Activated B cell treated with CpG ODN at 0.5 μM for 24 hours (primary cell): ENCODE measurements at regions of chr14 and their contacts with region 1.

Region 1: GRCh38 chr14:71403656-71404055 is 496.4 kb downstream of the PCNX1 start:
- DNase-seq: no peak
- ATAC-seq: peak; percentile 54
- H3K4me3 Mint-ChIP-seq: no peak overlapping the region
- H3K27ac Mint-ChIP-seq: peak overlapping the region; percentile 76
- H3K4me1 Mint-ChIP-seq: peaks cover 61% of the 10 kb centered on the region
- H3K27me3 Mint-ChIP-seq: no peaks in the 10 kb centered on the region
- CTCF ChIP-seq: no peak

Region 2: DNA sequence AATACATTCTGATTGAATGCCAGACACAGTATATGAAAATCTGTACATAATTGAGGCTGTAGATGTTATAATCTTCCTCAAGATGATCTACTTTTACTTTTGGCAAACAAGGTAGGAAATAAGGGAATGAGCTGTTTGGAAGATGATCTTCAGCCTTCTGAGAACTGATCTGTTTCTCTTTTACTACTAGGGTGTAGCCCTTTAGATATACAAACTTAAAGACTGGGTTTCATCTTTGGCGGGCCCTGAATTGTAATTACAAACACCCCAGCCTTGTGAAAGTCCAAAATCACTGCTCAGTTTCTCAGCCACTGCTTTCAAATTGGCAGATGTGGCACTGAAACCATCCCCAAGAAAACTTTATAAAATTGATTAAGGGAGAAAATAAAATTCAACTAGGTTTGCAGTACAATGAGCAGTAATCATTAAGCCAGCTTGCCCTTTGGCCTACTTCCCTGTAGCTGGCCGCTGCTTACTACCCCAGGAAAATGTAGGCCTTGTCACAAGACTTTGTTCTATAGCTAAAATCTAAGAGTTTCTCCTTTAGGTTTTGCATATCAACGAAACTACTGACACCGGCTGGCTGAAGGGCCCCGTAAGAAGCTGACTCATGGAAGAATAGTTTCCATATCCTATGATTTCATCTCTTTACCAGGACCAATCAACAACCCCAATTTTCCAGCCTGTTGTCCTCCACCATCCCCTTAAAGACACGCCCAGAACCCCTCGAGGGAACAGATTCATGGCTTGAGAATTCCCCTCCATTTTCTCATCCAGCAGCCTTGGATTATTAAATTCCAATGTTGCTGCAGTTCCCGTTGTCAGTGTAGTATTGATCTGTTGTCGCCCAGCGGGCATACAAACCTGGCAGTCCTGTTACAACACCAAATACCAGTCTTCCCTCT is 285.6 kb before region 1 on chr14:
- CTCF ChIA-PET with region 1: interaction called, 3 read pairs
- POLR2A ChIA-PET with region 1: no interaction called
- intact Hi-C with region 1: loop called (anchors 5 kb)
- DNase-seq: no peak
- ATAC-seq: peak; percentile 59
- H3K4me3 Mint-ChIP-seq: peak overlapping the region; percentile 41
- H3K27ac Mint-ChIP-seq: peak overlapping the region; percentile 93
- H3K4me1 Mint-ChIP-seq: peaks cover 40% of the 10 kb centered on the region
- H3K27me3 Mint-ChIP-seq: no peaks in the 10 kb centered on the region
- CTCF ChIP-seq: no peak

Region 3: DNA sequence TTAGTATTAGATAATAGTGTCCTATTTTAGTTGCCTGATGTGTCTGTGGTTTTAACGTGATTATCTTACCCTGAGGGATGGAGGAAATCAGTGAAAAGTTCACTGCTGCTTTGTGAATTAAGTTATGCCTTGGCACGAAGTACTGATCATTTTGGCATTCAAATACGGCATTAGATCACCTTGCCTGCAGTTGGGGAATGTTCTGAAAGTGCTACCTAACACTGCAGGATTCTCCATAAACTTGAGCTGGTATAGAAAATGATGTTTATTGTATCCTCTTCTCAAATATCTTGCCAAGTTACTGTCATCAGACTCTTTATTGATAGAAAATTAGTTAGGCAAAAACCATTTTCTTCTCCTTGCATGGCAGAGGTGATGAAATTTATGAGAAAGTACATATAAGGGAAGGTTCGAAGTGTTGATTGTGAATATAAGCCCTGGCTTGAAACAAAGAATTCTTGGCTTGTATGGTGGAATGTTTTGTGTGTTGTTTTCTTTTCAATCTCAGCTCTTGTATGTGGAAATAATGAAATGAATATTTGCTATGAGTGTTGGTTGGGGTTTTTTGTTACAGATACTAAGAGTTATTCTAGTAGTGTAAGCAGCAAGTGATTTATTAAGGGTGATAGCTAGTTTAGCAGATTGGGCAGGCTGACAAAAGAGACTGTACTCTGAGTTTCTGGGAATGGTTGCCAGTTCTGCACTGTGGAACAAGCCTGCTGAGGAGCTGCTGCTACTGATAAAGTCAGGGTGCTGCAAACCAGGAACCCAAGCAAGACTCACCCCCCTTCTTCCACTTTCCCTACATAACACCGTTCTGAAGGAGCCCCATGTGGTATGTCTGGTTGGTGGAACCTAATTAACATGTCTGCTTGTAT is 48.1 kb before region 1 on chr14:
- CTCF ChIA-PET with region 1: interaction called, 7 read pairs
- POLR2A ChIA-PET with region 1: interaction called, 45 read pairs
- intact Hi-C with region 1: loop called (anchors 1 kb)
- DNase-seq: no peak
- ATAC-seq: peak; percentile 19
- H3K4me3 Mint-ChIP-seq: peak overlapping the region; percentile 54
- H3K27ac Mint-ChIP-seq: peak overlapping the region; percentile 87
- H3K4me1 Mint-ChIP-seq: peaks cover 85% of the 10 kb centered on the region
- H3K27me3 Mint-ChIP-seq: no peaks in the 10 kb centered on the region
- CTCF ChIP-seq: no peak

Region 4: DNA sequence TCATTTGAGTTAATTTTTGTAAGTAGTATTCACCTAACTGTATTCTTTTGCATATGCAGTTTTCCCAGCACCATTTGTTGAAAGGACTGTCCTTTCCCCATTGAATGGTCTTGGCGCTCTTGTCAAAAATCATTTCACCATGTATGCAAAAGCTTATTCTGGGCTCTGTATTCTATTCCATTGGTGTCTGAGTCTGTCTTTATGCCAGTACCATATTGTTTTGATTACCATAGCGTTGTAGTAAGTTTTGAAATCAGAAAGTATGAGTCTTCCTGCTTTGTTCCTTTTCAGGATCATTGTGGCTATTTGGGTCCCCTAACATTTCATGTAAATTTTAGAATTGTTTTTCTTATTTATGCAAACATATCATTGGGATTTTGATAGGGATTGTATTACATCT is 19.8 kb after region 1 on chr14:
- CTCF ChIA-PET with region 1: no interaction called
- POLR2A ChIA-PET with region 1: no interaction called
- intact Hi-C with region 1: loop called (anchors 2 kb)
- DNase-seq: no peak
- ATAC-seq: no peak
- H3K4me3 Mint-ChIP-seq: no peak overlapping the region
- H3K27ac Mint-ChIP-seq: no peak overlapping the region
- H3K4me1 Mint-ChIP-seq: peaks cover 32% of the 10 kb centered on the region
- H3K27me3 Mint-ChIP-seq: no peaks in the 10 kb centered on the region
- CTCF ChIP-seq: no peak

Region 5: DNA sequence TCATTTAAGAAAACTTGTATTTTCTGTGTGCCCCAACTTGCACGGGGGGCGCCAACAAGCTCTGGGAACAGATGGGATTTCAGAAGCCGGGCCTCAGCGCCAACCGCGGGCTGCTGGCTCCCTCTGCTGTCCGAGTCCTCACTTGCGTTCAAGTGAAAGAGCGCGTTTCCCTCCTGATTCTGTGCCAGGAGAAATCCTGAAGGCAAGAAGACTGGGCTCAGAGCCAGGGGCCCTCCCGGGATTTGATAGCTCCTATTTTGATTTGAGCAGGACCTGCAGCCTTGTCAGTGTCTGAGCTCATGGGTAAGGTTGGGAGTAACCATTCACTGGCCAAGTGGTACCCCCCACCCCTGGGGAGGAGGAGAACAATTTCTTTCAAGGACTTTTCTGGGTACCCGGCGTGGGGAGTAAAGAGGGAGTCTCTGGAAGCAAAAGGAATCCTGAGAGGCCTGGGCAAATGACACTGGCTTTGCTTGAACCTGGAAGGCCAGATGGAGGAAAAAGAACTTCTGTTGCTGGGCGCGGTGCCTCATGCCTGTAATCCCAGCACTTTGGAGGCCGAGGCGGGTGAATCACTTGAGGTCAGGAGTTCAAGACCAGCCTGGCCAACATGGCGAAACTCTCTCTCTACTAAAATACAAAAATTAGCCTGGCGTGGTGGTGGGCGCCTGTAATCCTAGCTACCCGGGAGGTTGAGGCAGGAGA is 349.6 kb after region 1 on chr14:
- CTCF ChIA-PET with region 1: interaction called, 10 read pairs
- POLR2A ChIA-PET with region 1: no interaction called
- intact Hi-C with region 1: no loop called
- DNase-seq: peak; percentile 61
- ATAC-seq: peak; percentile 45
- H3K4me3 Mint-ChIP-seq: no peak overlapping the region
- H3K27ac Mint-ChIP-seq: no peak overlapping the region
- H3K4me1 Mint-ChIP-seq: peaks cover 3% of the 10 kb centered on the region
- H3K27me3 Mint-ChIP-seq: peaks cover 4% of the 10 kb centered on the region
- CTCF ChIP-seq: peak; percentile 49